ENCODE measurements at regions of chr16 and their contacts with region 1.

Region 1: GRCh38 chr16:22098405-22099255 is 6.3 kb downstream of the VWA3A start:
- DNase-seq: no peak
- ATAC-seq: peak; percentile 85
- H3K4me3 Mint-ChIP-seq: no peak overlapping the region
- H3K27ac Mint-ChIP-seq: peak overlapping the region; percentile 35; the same call in 1 of the 2 replicates
- H3K4me1 Mint-ChIP-seq: peaks cover 28% of the 10 kb centered on the region
- H3K27me3 Mint-ChIP-seq: no peaks in the 10 kb centered on the region; the same call in 1 of the 2 replicates
- CTCF ChIP-seq: no peak

Region 2: GRCh38 chr16:22007509-22008214 is 91.0 kb before region 1 on chr16 and contains the start of gene MOSMO:
- CTCF ChIA-PET with region 1: interaction called, 19 read pairs
- POLR2A ChIA-PET with region 1: no interaction called
- DNase-seq: peak; percentile 66
- ATAC-seq: peak; percentile 82
- H3K4me3 Mint-ChIP-seq: peak within 1 kb of the TSS; percentile 90
- H3K27ac Mint-ChIP-seq: peak within 1 kb of the TSS; percentile 21; the same call in 1 of the 2 replicates
- H3K4me1 Mint-ChIP-seq: peaks cover 12% of the 10 kb centered on the region
- H3K27me3 Mint-ChIP-seq: peaks cover 13% of the 10 kb centered on the region
- CTCF ChIP-seq: no peak
- total RNA-seq, gene MOSMO: 10.7 to 11.6 TPM (median 10.7 TPM) in 3 replicates

Region 3: DNA sequence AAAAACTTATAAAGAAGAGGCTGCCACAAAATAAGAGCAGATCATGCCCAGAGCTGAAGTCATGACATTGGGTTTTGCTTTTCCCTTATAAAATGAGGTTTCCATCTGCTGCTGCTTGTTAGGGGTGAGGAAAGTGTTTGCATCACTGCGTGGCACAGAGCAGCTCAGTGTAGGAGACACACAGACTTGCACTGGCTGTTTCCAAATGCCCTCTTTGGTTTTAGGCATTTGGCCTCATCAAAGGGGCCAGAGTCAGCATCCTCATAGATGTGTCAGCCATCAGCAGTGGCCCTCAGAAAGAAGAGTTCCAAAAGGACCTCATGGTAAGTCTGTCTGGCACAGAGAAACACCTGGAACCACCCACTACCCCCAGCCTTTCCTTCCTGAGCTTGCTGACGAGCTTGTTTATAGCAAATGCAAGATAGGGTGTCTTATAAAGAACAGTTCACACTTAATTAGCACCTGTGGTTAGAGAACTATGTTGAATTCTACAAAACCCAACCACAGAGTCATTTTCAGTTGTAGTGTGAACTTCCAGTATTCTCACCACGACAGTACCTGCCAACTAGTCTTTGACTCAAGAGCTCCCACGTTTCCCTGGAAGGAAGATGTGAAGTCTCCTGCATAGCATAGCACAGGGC is 10.7 kb after region 1 on chr16:
- CTCF ChIA-PET with region 1: interaction called, 21 read pairs
- POLR2A ChIA-PET with region 1: no interaction called
- DNase-seq: no peak
- ATAC-seq: no peak
- H3K4me3 Mint-ChIP-seq: no peak overlapping the region
- H3K27ac Mint-ChIP-seq: no peak overlapping the region
- H3K4me1 Mint-ChIP-seq: peaks cover 5% of the 10 kb centered on the region
- H3K27me3 Mint-ChIP-seq: peaks cover 7% of the 10 kb centered on the region; the same call in 1 of the 2 replicates
- CTCF ChIP-seq: no peak

Region 4: DNA sequence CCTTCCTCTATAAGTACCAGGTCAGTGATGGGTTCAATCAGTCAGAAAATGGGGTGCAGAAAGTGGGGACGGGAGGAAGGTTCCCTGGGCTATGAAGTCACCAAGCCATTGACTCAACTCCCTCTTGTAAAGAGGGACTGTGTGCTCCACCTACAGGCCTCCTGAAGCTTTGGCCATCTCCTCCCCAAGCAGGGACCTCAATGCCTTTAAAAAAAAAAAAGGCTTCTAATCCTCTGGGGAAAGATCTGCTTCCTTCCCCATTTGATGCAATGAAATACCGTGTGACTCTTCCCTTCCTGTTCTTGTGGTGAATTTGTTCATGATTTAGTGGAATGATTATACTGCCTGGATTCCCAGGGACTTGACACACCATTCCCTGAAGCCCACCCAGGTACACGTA is 24.5 kb after region 1 on chr16:
- CTCF ChIA-PET with region 1: interaction called, 13 read pairs
- POLR2A ChIA-PET with region 1: no interaction called
- DNase-seq: no peak
- ATAC-seq: peak; percentile 81
- H3K4me3 Mint-ChIP-seq: no peak overlapping the region
- H3K27ac Mint-ChIP-seq: no peak overlapping the region
- H3K4me1 Mint-ChIP-seq: no peaks in the 10 kb centered on the region
- H3K27me3 Mint-ChIP-seq: peaks cover 6% of the 10 kb centered on the region; the same call in 1 of the 2 replicates
- CTCF ChIP-seq: no peak

Region 5: DNA sequence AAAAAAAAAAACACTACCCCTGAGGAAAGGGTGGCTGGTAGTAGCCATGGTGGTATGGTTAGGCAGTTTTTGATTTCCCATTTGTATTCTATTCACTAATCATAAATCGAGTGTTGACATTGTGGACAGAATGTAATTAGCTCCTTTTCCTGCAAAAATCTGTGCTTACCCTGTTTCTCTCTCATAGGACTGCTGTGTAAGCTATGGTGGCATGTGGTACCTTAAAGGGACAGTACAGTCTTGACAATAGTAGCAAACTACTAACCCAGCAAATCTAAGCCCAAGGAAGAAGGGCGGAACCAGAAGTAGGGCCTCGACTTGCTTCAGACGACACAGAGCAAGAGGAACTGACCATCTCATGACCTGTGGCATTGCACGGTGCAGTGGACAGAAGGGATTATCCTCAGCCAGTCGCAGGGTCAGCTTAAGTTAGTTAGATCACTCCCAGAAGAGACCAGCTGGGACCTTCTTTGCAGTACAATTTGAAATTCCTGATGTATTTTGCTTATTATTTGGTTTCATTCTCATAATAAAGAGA is 234.9 kb after region 1 on chr16:
- CTCF ChIA-PET with region 1: no interaction called
- POLR2A ChIA-PET with region 1: no interaction called
- DNase-seq: no peak
- ATAC-seq: no peak
- H3K4me3 Mint-ChIP-seq: no peak overlapping the region
- H3K27ac Mint-ChIP-seq: no peak overlapping the region; the same call in 1 of the 2 replicates
- H3K4me1 Mint-ChIP-seq: no peaks in the 10 kb centered on the region
- H3K27me3 Mint-ChIP-seq: peaks cover 4% of the 10 kb centered on the region
- CTCF ChIP-seq: no peak